Activated T-helper 1 cell treated with anti-CD3 and anti-CD28 coated beads, Interleukin-12 subunit alpha, Interleukin-12 subunit beta, Interleukin-2, Interleukin-4 antibody, amounts not matched to agents 30 ng/mL and 10 ng/mL and 1 ng/mL, durations not matched to agents 14 hours and 24 hours and 36 hours (primary cell): ENCODE measurements at regions of chr15 and their contacts with region 1.

Region 1: GRCh38 chr15:58357521-58358476 is 74.0 kb upstream of the LIPC start:
- DNase-seq: peak; percentile 35
- H3K4me3 Mint-ChIP-seq: peak overlapping the region; percentile 17
- H3K27ac Mint-ChIP-seq: peak overlapping the region; percentile 85
- H3K4me1 Mint-ChIP-seq: peaks cover 40% of the 10 kb centered on the region
- H3K27me3 Mint-ChIP-seq: peaks cover 2% of the 10 kb centered on the region

Region 2: DNA sequence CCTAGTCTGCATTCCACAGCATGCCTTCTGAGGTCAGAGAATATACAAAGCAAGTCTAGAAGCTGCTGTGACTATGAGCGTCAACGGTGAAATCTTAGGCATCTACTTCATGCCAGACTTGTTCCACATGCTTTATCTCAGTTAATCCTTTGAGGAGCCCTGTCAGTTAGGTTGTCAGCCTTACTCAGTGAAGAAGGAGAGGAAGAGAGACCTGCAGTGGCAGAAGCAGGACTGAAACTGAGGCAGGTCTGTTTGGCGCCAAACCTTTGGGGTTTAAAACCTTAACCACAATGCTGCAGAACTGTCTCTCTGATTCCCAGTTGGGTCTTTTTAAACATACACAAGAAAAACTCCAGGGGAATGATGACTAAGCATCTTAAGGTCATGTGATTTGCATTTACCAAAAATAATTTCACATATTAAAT is 65.0 kb before region 1 on chr15:
- intact Hi-C with region 1: loop called (anchors 1 kb)
- DNase-seq: no peak
- H3K4me3 Mint-ChIP-seq: no peak overlapping the region
- H3K27ac Mint-ChIP-seq: peak overlapping the region; percentile 61
- H3K4me1 Mint-ChIP-seq: peaks cover 48% of the 10 kb centered on the region
- H3K27me3 Mint-ChIP-seq: peaks cover 2% of the 10 kb centered on the region